HepG2 (cell line): ENCODE measurements at regions of chr3 and their contacts with region 1.

Region 1: DNA sequence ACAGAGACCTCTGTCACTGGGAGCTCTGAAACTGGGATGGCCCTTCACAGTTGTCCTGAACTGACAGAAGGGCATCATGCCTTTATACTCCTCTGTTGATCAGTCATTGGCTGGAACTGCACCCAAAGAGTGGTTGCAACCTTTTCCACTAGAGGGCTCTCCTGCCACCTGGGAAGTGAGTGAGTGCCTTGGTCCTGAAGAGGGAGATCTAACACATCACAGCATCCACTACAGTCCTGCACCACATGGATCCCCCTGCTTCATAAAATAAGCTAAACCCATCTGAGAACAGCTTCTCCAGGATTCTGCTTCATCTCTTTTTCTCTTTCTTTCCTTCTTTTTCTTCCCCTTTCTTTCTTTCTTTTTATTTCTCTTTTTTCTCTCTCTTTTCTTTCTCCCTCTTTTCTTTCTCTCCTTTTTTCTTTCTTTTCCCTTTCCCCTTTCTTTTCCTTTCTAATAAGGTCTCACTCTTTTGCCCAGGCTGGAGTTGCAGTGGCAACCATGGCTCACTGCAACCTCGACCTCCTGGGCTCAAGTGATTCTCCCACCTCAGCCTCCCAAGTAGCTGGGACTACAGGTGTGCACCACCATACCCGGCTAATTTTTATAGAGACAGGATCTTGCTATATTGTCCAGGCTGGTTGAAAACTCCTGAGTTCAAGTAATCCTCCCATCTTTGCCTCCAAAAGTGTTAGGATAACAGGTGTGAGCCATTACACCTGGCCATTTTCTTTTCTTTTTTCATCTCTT is 42.8 kb upstream of the RAF1 start:
- DNase-seq: peak; percentile 79
- ATAC-seq: peak; percentile 98
- H3K4me3 ChIP-seq: no peak overlapping the region
- H3K27ac ChIP-seq: no peak overlapping the region
- H3K4me1 ChIP-seq: peaks cover 20% of the 10 kb centered on the region; the same call in 1 of the 2 replicates
- H3K27me3 ChIP-seq: peaks cover 0 to 3% of the 10 kb centered on the region in 2 experiments; a peak in 1 of 5 replicates
- CTCF ChIP-seq: peak; percentile 90
- EP300 ChIP-seq: no peak
- POLR2A ChIP-seq: no peak
- RAD21 ChIP-seq: peak; percentile 68

Region 2: GRCh38 chr3:12719984-12720898 is 13.6 kb after region 1 on chr3:
- CTCF ChIA-PET with region 1: interaction called, 6 read pairs
- POLR2A ChIA-PET with region 1: no interaction called
- in situ Hi-C with region 1: no loop called
- intact Hi-C with region 1: loop called (anchors 2 kb)
- DNase-seq: peak; percentile 84
- ATAC-seq: peak; percentile 98
- H3K4me3 ChIP-seq: no peak overlapping the region
- H3K27ac ChIP-seq: no peak overlapping the region
- H3K4me1 ChIP-seq: peaks cover 10% of the 10 kb centered on the region
- H3K27me3 ChIP-seq: no peaks in the 10 kb centered on the region
- CTCF ChIP-seq: peak; percentile 90
- EP300 ChIP-seq: no peak
- POLR2A ChIP-seq: no peak
- RAD21 ChIP-seq: peak; percentile 48; the same call in 1 of the 2 replicates

Region 3: DNA sequence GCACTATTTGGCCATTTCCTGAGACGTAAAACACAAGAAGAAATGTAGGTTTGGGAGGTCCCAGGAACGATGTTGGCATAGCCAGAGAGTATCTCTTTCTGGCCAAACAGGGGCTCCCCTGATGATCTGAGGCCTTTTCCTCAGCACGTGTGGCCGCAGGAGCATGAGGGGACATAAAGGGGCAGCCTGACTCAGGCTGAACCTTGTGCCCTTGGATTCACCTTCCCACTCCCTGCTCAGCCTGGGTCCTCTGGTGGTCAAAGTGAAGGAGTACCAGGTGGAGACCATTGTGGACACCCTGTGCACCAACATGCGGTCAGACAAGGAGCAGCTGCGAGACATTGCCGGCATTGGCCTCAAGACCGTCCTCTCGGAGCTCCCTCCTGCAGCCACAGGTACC is 100.4 kb after region 1 on chr3:
- CTCF ChIA-PET with region 1: no interaction called
- POLR2A ChIA-PET with region 1: no interaction called
- in situ Hi-C with region 1: no loop called
- intact Hi-C with region 1: loop called (anchors 1 kb)
- DNase-seq: peak; percentile 47
- ATAC-seq: peak; percentile 61
- H3K4me3 ChIP-seq: no peak overlapping the region; a peak in 1 of 6 replicates
- H3K27ac ChIP-seq: no peak overlapping the region
- H3K4me1 ChIP-seq: peaks cover 29% of the 10 kb centered on the region
- H3K27me3 ChIP-seq: peaks cover 0 to 47% of the 10 kb centered on the region in 2 experiments; a peak in 3 of 5 replicates
- CTCF ChIP-seq: peak; percentile 56
- EP300 ChIP-seq: no peak
- POLR2A ChIP-seq: no peak
- RAD21 ChIP-seq: no peak